ENCODE measurements at regions of chr11 and their contacts with region 1.

Region 1: GRCh38 chr11:112555491-112556364 is 295.1 kb upstream of the PLET1 start:
- DNase-seq: peak; percentile 9
- H3K4me3 ChIP-seq: no peak overlapping the region
- H3K27ac ChIP-seq: no peak overlapping the region
- H3K4me1 ChIP-seq: peaks cover 4% of the 10 kb centered on the region
- H3K27me3 ChIP-seq: no peaks in the 10 kb centered on the region
- CTCF ChIP-seq: peak; percentile 58 to 72

Region 2: GRCh38 chr11:112219476-112220232 is 336.1 kb before region 1 on chr11:
- CTCF ChIA-PET with region 1: no interaction called
- dilution Hi-C with region 1: no loop called
- in situ Hi-C with region 1: no loop called
- intact Hi-C with region 1: loop called (anchors 10 kb)
- DNase-seq: peak; percentile 53
- H3K4me3 ChIP-seq: no peak overlapping the region
- H3K27ac ChIP-seq: no peak overlapping the region
- H3K4me1 ChIP-seq: peaks cover 6% of the 10 kb centered on the region
- H3K27me3 ChIP-seq: no peaks in the 10 kb centered on the region
- CTCF ChIP-seq: peak; percentile 63 to 64

Region 3: DNA sequence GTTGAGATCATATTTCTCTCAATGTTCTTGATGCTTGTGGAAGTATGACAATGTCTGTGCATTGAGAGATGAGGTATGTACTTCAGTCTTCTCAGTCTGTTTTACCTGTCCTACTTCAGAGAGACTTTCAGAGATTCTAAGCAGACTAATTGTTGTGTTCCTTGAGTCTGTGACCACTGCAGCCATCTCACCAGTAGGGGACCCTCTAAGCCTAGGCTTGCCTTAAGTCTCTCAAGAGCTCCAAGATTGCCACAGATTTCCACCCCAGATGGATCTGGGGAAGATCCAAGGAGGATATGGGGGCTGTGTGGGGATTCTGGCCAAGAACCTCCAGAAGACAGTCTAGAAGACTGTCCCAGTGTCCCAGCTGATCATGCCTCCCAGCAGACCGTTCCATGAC is 115.2 kb before region 1 on chr11:
- CTCF ChIA-PET with region 1: interaction called, 4 read pairs
- dilution Hi-C with region 1: no loop called
- in situ Hi-C with region 1: no loop called
- intact Hi-C with region 1: loop called (anchors 1 kb)
- DNase-seq: peak; percentile 19
- H3K4me3 ChIP-seq: no peak overlapping the region
- H3K27ac ChIP-seq: no peak overlapping the region
- H3K4me1 ChIP-seq: no peaks in the 10 kb centered on the region
- H3K27me3 ChIP-seq: peaks cover 10% of the 10 kb centered on the region
- CTCF ChIP-seq: peak; percentile 44 to 45

Region 4: GRCh38 chr11:112748713-112749543 is 193.2 kb after region 1 on chr11:
- CTCF ChIA-PET with region 1: no interaction called
- dilution Hi-C with region 1: no loop called
- in situ Hi-C with region 1: no loop called
- intact Hi-C with region 1: no loop called
- DNase-seq: no peak
- H3K4me3 ChIP-seq: no peak overlapping the region
- H3K27ac ChIP-seq: no peak overlapping the region
- H3K4me1 ChIP-seq: no peaks in the 10 kb centered on the region
- H3K27me3 ChIP-seq: peaks cover 6% of the 10 kb centered on the region
- CTCF ChIP-seq: no peak